ENCODE measurements at regions of chr11 and their contacts with region 1.

Region 1: GRCh38 chr11:46489661-46490560 is 98.3 kb upstream of the CHRM4 start:
- DNase-seq: peak; percentile 59
- ATAC-seq: peak; percentile 95
- H3K4me3 ChIP-seq: no peak overlapping the region
- H3K27ac ChIP-seq: no peak overlapping the region
- H3K4me1 ChIP-seq: no peaks in the 10 kb centered on the region
- H3K27me3 ChIP-seq: no peaks in the 10 kb centered on the region
- CTCF ChIP-seq: peak; percentile 71

Region 2: DNA sequence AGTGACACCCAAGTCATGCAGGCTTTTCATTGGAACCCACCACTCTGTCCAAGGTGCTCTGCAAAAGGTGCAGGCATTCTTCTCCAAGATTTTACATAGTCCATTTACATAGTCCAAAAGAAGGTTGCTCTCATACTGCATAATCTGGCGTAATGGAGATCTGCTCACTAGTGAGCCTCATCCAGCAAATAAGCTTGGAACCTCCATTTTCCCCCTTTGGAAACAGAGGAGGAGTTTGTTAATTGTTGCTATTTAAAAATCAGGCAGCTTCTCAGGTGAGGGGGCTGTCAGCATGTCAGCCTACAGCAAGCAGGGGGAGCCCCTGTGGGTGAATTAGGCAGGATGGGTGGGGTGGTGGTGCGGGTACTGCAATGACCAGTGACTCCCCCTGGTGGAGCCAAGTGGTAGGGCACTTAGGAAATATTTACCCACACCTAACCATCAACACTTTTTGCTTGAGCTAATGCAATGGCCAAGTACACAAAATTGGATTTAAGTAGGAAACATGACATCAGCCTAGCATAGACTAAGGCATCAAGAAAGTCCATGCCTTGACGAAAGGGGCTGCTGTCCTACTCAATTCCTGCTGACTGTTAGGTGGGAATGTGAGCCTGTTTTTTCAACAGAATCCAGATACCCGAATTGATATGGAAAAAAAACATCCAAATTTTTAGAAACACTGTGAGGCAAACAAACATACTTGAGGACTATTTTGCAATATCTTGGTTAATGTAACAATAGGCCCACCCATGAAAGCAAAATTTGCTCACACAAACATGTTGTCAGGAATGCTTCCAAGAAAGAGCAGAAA is 39.4 kb after region 1 on chr11:
- CTCF ChIA-PET with region 1: interaction called, 27 read pairs
- POLR2A ChIA-PET with region 1: no interaction called
- intact Hi-C with region 1: loop called (anchors 2 kb)
- DNase-seq: peak; percentile 65
- ATAC-seq: peak; percentile 87
- H3K4me3 ChIP-seq: no peak overlapping the region
- H3K27ac ChIP-seq: no peak overlapping the region
- H3K4me1 ChIP-seq: no peaks in the 10 kb centered on the region
- H3K27me3 ChIP-seq: no peaks in the 10 kb centered on the region
- CTCF ChIP-seq: peak; percentile 86

Region 3: DNA sequence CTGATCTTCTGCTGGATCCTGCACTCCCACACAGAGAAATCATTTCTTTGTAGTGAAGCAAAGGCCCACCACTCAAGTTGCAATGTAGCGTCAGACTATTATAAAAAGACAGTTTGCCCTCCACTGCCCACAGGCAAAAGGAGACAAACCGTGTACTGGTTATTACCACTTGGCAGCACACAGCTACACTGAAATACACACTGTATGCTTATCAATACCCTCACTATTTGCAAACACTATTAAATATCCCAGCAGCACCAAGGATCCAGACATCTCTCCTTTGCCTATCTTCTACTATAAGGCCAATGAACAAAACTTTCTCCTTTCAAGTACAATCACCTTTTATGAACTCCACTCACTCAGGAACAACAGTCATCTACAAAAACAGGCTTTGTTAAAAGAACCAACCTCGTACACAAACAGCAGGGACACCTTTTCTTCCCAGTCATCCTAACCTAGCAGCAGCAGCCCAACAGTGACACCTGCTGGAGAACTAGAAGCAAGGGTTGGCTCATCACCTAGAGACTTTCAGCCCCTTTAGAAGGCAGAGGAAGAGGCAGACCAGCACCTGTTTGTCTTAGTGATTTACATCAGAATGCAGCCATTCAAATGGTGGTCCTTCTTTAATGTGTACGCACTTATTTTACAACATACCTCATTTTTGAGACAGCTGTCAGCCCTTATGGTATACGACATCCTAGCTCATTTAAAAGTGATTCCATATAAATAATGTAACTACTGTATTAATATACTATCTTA is 47.8 kb after region 1 on chr11:
- CTCF ChIA-PET with region 1: interaction called, 7 read pairs
- POLR2A ChIA-PET with region 1: no interaction called
- intact Hi-C with region 1: loop called (anchors 2 kb)
- DNase-seq: peak; percentile 80
- ATAC-seq: peak; percentile 96
- H3K4me3 ChIP-seq: no peak overlapping the region
- H3K27ac ChIP-seq: no peak overlapping the region
- H3K4me1 ChIP-seq: no peaks in the 10 kb centered on the region
- H3K27me3 ChIP-seq: no peaks in the 10 kb centered on the region
- CTCF ChIP-seq: peak; percentile 92

Region 4: GRCh38 chr11:46827995-46828394 is 338.1 kb after region 1 on chr11:
- CTCF ChIA-PET with region 1: no interaction called
- POLR2A ChIA-PET with region 1: no interaction called
- intact Hi-C with region 1: no loop called
- DNase-seq: no peak
- ATAC-seq: no peak
- H3K4me3 ChIP-seq: no peak overlapping the region
- H3K27ac ChIP-seq: no peak overlapping the region
- H3K4me1 ChIP-seq: peaks cover 13% of the 10 kb centered on the region
- H3K27me3 ChIP-seq: no peaks in the 10 kb centered on the region
- CTCF ChIP-seq: no peak